Naive thymus-derived CD4-positive, alpha-beta T cell (primary cell): ENCODE measurements at regions of chr1 and their contacts with region 1.

Region 1: GRCh38 chr1:173420330-173420806 is 56.8 kb upstream of the PRDX6 start:
- DNase-seq: peak; percentile 25 to 71 (median 59)
- ATAC-seq: peak; percentile 83
- H3K4me3 ChIP-seq: no peak overlapping the region
- H3K4me3 Mint-ChIP-seq: peak overlapping the region in 2 of 10 donors; percentile 29 to 38
- H3K27ac ChIP-seq: no peak overlapping the region
- H3K27ac Mint-ChIP-seq: peak overlapping the region in 1 of 9 donors; percentile 20
- H3K4me1 ChIP-seq: no peaks in the 10 kb centered on the region
- H3K4me1 Mint-ChIP-seq: peaks cover 4 to 10% (median 6%) of the 10 kb centered on the region in 7 donors
- H3K27me3 ChIP-seq: no peaks in the 10 kb centered on the region
- H3K27me3 Mint-ChIP-seq: no peaks in the 10 kb centered on the region

Region 2: GRCh38 chr1:173601588-173601987 is 181.2 kb after region 1 on chr1:
- CTCF ChIA-PET with region 1: no interaction called
- POLR2A ChIA-PET with region 1: no interaction called
- intact Hi-C with region 1: no loop called
- DNase-seq: no peak
- ATAC-seq: no peak
- H3K4me3 ChIP-seq: no peak overlapping the region
- H3K4me3 Mint-ChIP-seq: no peak overlapping the region
- H3K27ac ChIP-seq: no peak overlapping the region
- H3K27ac Mint-ChIP-seq: no peak overlapping the region
- H3K4me1 ChIP-seq: no peaks in the 10 kb centered on the region
- H3K4me1 Mint-ChIP-seq: peaks cover 0 to 16% (median 4%) of the 10 kb centered on the region in 7 donors
- H3K27me3 ChIP-seq: no peaks in the 10 kb centered on the region
- H3K27me3 Mint-ChIP-seq: peaks cover 0 to 12% (median 9%) of the 10 kb centered on the region in 5 donors

Region 3: DNA sequence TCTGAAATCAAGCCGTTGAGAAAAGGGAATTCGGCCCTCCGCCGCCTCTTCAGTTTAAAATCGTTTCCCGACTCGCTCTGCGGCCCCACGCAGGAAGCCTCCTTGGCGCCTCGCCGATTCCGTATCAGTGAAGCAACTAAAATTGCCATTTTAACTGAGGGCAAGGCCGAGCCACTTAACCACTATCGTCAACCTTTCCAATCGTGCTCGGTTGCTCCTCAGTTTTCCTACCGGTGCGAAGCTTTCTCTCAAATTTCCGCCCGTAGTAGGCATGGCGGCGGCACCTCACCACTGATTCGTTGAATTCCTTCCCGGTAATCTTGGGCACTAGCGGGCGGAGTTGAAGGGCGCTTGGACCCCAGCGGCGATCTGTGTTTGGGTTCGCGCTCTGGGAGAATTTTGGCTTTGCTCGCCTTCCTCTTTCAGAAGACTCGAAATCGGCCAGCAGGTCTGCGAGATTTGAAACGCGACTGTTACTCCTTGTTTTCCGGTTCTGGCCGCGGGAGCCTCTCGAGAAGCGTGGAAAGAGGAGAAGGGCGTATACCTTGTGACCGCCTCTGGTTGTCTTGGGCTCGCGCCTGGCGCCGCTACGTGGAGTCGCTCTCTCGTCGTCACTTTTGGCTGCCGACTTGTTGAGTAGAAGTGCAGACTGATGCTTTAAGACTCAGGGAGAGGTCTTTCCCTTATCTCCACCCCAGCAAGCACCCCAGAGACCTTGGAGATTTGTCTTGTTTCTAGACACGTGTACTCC is 404.1 kb after region 1 on chr1 and contains the starts of genes CENPL and DARS2:
- CTCF ChIA-PET with region 1: interaction called, 8 read pairs
- POLR2A ChIA-PET with region 1: no interaction called
- intact Hi-C with region 1: loop called (anchors 1 kb)
- DNase-seq: peak; percentile 67 to 93 (median 91)
- ATAC-seq: peak; percentile 94
- H3K4me3 ChIP-seq: peak within 1 kb of the TSS; percentile 99
- H3K4me3 Mint-ChIP-seq: peak within 1 kb of the TSS; percentile 87 to 99 (median 94)
- H3K27ac ChIP-seq: peak within 1 kb of the TSS; percentile 80
- H3K27ac Mint-ChIP-seq: peak within 1 kb of the TSS; percentile 91 to 98 (median 96)
- H3K4me1 ChIP-seq: peaks cover 10 to 14% of the 10 kb centered on the region in 2 donors
- H3K4me1 Mint-ChIP-seq: peaks cover 32 to 68% (median 50%) of the 10 kb centered on the region in 7 donors
- H3K27me3 ChIP-seq: no peaks in the 10 kb centered on the region
- H3K27me3 Mint-ChIP-seq: no peaks in the 10 kb centered on the region
- total RNA-seq, gene CENPL: 5.2 to 25.1 (median 9.5) TPM
- total RNA-seq, gene DARS2: 3.6 to 26.0 (median 13.5) TPM

Region 4: GRCh38 chr1:174074757-174075156 is 654.4 kb after region 1 on chr1:
- CTCF ChIA-PET with region 1: no interaction called
- POLR2A ChIA-PET with region 1: no interaction called
- intact Hi-C with region 1: loop called in 1 of 2 experiments (anchors 2 kb)
- DNase-seq: peak in 3 of 9 donors; percentile 5 to 11 (median 11)
- ATAC-seq: no peak
- H3K4me3 ChIP-seq: no peak overlapping the region
- H3K4me3 Mint-ChIP-seq: no peak overlapping the region
- H3K27ac ChIP-seq: no peak overlapping the region
- H3K27ac Mint-ChIP-seq: no peak overlapping the region
- H3K4me1 ChIP-seq: no peaks in the 10 kb centered on the region
- H3K4me1 Mint-ChIP-seq: peaks cover 0 to 2% (median 0%) of the 10 kb centered on the region in 7 donors
- H3K27me3 ChIP-seq: peaks cover 0 to 3% of the 10 kb centered on the region in 2 donors
- H3K27me3 Mint-ChIP-seq: peaks cover 0 to 14% (median 0%) of the 10 kb centered on the region in 5 donors

Region 5: DNA sequence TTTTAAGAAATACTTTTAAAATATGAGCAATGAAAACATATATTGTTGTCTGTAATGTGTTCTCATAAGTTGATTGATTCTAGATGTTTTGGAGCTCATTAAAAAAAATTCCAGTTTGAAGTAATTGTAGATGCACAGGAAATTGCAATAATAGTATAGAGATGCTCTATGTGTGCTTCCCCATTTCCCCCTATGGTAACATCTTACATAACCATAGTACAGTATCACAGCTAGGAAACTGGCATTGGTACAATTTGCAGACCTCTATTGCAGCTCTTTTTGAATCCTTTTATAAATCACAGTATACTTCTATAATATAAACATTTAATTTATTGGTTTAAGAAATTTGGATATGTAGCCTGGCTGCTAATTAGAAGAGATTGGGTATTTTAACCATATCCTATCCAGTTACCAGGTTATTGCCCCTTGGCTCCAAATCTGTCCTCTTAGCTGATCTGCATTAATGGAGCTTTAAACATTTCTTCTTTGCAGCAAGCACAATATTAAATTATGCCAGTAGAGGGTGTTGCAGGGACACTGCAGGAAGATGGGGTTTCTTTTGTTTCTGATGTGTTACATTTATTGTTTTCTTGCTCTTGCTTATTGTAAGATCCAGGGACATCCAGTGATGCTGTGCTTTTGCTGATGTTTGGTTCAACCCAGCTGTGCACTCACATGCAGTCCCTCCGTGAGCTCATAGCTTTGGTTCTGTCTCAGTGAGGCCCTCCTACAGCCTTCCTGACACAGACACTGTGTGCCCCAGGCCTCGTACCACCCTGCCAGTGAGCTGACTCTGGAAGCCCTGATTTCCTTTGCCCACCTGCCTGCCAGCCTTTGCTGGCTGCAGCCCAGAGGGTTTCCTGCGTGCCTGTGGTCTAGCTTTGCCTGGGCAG is 842.2 kb after region 1 on chr1:
- CTCF ChIA-PET with region 1: no interaction called
- POLR2A ChIA-PET with region 1: no interaction called
- intact Hi-C with region 1: loop called in 1 of 2 experiments (anchors 5 kb)
- DNase-seq: peak in 6 of 9 donors; percentile 3 to 25 (median 14)
- ATAC-seq: peak; percentile 36
- H3K4me3 ChIP-seq: no peak overlapping the region
- H3K4me3 Mint-ChIP-seq: no peak overlapping the region
- H3K27ac ChIP-seq: no peak overlapping the region
- H3K27ac Mint-ChIP-seq: no peak overlapping the region
- H3K4me1 ChIP-seq: no peaks in the 10 kb centered on the region
- H3K4me1 Mint-ChIP-seq: peaks cover 0 to 2% (median 0%) of the 10 kb centered on the region in 7 donors
- H3K27me3 ChIP-seq: no peaks in the 10 kb centered on the region
- H3K27me3 Mint-ChIP-seq: no peaks in the 10 kb centered on the region

Region 6: GRCh38 chr1:174743654-174744561 is 1323.5 kb after region 1 on chr1:
- CTCF ChIA-PET with region 1: interaction called, 3 read pairs
- POLR2A ChIA-PET with region 1: no interaction called
- intact Hi-C with region 1: loop called in 1 of 2 experiments (anchors 1 kb)
- DNase-seq: peak in 5 of 9 donors; percentile 29 to 53 (median 36)
- ATAC-seq: peak; percentile 47
- H3K4me3 ChIP-seq: no peak overlapping the region
- H3K4me3 Mint-ChIP-seq: no peak overlapping the region
- H3K27ac ChIP-seq: no peak overlapping the region
- H3K27ac Mint-ChIP-seq: no peak overlapping the region
- H3K4me1 ChIP-seq: no peaks in the 10 kb centered on the region
- H3K4me1 Mint-ChIP-seq: peaks cover 0 to 18% (median 13%) of the 10 kb centered on the region in 7 donors
- H3K27me3 ChIP-seq: no peaks in the 10 kb centered on the region
- H3K27me3 Mint-ChIP-seq: peaks cover 0 to 5% (median 0%) of the 10 kb centered on the region in 5 donors